CD8-positive, alpha-beta memory T cell (primary cell): ENCODE measurements at regions of chr11 and their contacts with region 1.

Region 1: DNA sequence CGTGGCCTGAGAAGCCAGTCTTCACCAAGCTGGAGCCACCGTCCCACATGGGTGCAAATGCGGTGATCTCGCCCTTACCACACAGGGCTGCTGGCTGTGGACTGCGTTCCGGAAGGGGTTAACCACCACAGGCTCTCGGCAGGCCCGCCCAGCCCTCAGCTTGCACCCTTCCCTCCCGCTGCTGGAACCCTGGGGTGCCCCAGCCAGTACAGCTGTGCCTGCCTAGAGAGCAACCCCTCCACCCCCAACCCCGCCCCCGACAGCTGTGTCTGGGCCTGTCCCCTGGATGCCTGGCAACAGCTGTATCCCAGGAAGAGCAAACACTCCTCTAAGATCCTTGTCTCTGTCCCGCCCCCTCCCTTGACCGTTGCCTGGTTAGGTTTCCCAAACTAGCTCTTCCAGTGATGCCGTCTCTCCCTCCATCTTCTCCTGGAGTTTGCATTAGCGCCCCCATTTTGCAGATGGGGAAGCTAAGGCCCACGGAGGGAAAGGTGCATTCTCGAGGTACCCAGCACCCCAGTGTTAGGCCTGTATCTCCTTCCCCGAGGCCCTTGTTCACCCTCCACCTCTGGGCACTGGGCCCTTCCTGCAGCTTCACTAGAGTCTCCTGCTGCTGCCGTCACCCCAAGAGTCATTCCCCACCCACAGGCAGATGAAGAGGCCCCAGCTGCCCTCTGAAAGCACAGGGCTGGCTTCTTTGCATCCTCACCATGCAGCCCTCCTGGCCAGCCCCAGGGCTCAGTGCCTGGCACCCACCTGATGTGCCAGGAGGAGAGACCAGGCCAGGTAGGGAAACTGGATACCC is 12.6 kb upstream of the COX8A start:
- DNase-seq: peak in 2 of 5 donors; percentile 21 to 28
- H3K4me3 ChIP-seq: no peak overlapping the region
- H3K4me3 Mint-ChIP-seq: peak overlapping the region in 6 of 7 donors; percentile 19 to 71 (median 68)
- H3K27ac ChIP-seq: no peak overlapping the region
- H3K27ac Mint-ChIP-seq: peak overlapping the region in 6 of 8 donors; percentile 1 to 82 (median 41)
- H3K4me1 ChIP-seq: peaks cover 18% of the 10 kb centered on the region
- H3K4me1 Mint-ChIP-seq: peaks cover 17 to 23% (median 18%) of the 10 kb centered on the region in 3 donors
- H3K27me3 ChIP-seq: no peaks in the 10 kb centered on the region
- H3K27me3 Mint-ChIP-seq: no peaks in the 10 kb centered on the region

Region 2: GRCh38 chr11:63779039-63779438 is 182.8 kb before region 1 on chr11:
- CTCF ChIA-PET with region 1: no interaction called
- POLR2A ChIA-PET with region 1: interaction called, 10 read pairs
- DNase-seq: no peak
- H3K4me3 ChIP-seq: no peak overlapping the region
- H3K4me3 Mint-ChIP-seq: no peak overlapping the region
- H3K27ac ChIP-seq: no peak overlapping the region
- H3K27ac Mint-ChIP-seq: no peak overlapping the region
- H3K4me1 ChIP-seq: no peaks in the 10 kb centered on the region
- H3K4me1 Mint-ChIP-seq: no peaks in the 10 kb centered on the region
- H3K27me3 ChIP-seq: no peaks in the 10 kb centered on the region
- H3K27me3 Mint-ChIP-seq: peaks cover 3 to 7% of the 10 kb centered on the region in 2 donors

Region 3: GRCh38 chr11:63945477-63946163 is 16.2 kb before region 1 on chr11:
- CTCF ChIA-PET with region 1: interaction called, 15 read pairs
- POLR2A ChIA-PET with region 1: interaction called, 4 read pairs
- DNase-seq: peak; percentile 14 to 61 (median 45)
- H3K4me3 ChIP-seq: no peak overlapping the region
- H3K4me3 Mint-ChIP-seq: no peak overlapping the region
- H3K27ac ChIP-seq: no peak overlapping the region
- H3K27ac Mint-ChIP-seq: peak overlapping the region in 2 of 8 donors; percentile 8 to 32
- H3K4me1 ChIP-seq: no peaks in the 10 kb centered on the region
- H3K4me1 Mint-ChIP-seq: peaks cover 13 to 22% (median 22%) of the 10 kb centered on the region in 3 donors
- H3K27me3 ChIP-seq: no peaks in the 10 kb centered on the region
- H3K27me3 Mint-ChIP-seq: no peaks in the 10 kb centered on the region

Region 4: DNA sequence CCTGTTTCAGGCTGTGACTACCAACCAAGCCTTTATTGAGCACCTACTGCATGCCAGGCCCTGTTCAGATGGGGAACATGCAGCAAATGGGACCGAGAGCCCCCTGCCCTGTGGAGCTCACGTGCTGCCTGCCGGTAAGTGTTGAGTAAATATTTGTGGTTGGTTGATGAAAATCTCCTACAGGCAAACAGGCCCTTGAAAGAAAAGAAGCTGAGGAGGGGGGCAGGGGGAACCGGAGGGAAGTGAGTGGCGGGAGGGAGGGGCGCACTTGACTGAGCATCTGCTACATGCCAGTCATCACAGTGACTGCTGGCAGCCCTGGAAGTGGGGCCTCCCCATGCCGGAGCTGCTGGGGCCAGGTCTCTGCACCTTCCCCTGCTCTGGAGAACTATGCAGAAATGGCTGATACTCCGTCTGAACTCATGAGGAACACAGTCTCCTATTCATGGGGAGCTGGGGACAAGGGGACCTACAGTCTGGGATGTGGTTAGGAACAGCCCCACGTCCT is 169.9 kb after region 1 on chr11:
- CTCF ChIA-PET with region 1: no interaction called
- POLR2A ChIA-PET with region 1: no interaction called
- DNase-seq: no peak
- H3K4me3 ChIP-seq: no peak overlapping the region
- H3K4me3 Mint-ChIP-seq: no peak overlapping the region
- H3K27ac ChIP-seq: no peak overlapping the region
- H3K27ac Mint-ChIP-seq: no peak overlapping the region
- H3K4me1 ChIP-seq: no peaks in the 10 kb centered on the region
- H3K4me1 Mint-ChIP-seq: no peaks in the 10 kb centered on the region
- H3K27me3 ChIP-seq: no peaks in the 10 kb centered on the region
- H3K27me3 Mint-ChIP-seq: no peaks in the 10 kb centered on the region